PC-9 (cell line): ENCODE measurements at regions of chr2 and their contacts with region 1.

Region 1: GRCh38 chr2:168396131-168396530 is 59.9 kb upstream of the CERS6 start:
- DNase-seq: no peak
- H3K4me3 ChIP-seq: no peak overlapping the region
- H3K27ac ChIP-seq: no peak overlapping the region
- H3K4me1 ChIP-seq: no peaks in the 10 kb centered on the region
- H3K27me3 ChIP-seq: no peaks in the 10 kb centered on the region
- CTCF ChIP-seq: no peak

Region 2: DNA sequence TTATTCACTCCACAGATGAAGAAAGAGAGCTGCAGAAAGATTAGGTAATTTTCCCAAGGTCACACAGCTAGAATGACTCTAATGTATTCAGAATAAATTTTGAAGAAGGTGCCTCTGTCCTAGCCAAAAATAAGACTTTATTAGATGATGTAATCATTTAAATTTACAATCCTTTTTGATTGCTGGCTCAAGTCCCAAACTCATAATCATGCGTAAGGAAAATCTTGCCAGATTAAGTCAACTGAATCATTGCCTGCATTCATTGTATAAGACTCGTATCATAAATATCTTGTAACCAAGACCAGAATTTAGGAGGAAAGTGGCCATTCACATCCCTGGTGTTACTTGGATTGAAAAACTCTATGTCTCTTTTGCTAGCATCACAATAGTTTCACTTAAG is 95.7 kb before region 1 on chr2:
- CTCF ChIA-PET with region 1: interaction called, 14 read pairs
- POLR2A ChIA-PET with region 1: no interaction called
- intact Hi-C with region 1: no loop called
- DNase-seq: no peak
- H3K4me3 ChIP-seq: no peak overlapping the region
- H3K27ac ChIP-seq: no peak overlapping the region
- H3K4me1 ChIP-seq: no peaks in the 10 kb centered on the region
- H3K27me3 ChIP-seq: no peaks in the 10 kb centered on the region
- CTCF ChIP-seq: no peak

Region 3: GRCh38 chr2:168470320-168471162 is 74.4 kb after region 1 on chr2:
- CTCF ChIA-PET with region 1: no interaction called
- POLR2A ChIA-PET with region 1: no interaction called
- intact Hi-C with region 1: no loop called
- DNase-seq: no peak
- H3K4me3 ChIP-seq: no peak overlapping the region
- H3K27ac ChIP-seq: no peak overlapping the region
- H3K4me1 ChIP-seq: peaks cover 15% of the 10 kb centered on the region
- H3K27me3 ChIP-seq: no peaks in the 10 kb centered on the region
- CTCF ChIP-seq: no peak

Region 4: DNA sequence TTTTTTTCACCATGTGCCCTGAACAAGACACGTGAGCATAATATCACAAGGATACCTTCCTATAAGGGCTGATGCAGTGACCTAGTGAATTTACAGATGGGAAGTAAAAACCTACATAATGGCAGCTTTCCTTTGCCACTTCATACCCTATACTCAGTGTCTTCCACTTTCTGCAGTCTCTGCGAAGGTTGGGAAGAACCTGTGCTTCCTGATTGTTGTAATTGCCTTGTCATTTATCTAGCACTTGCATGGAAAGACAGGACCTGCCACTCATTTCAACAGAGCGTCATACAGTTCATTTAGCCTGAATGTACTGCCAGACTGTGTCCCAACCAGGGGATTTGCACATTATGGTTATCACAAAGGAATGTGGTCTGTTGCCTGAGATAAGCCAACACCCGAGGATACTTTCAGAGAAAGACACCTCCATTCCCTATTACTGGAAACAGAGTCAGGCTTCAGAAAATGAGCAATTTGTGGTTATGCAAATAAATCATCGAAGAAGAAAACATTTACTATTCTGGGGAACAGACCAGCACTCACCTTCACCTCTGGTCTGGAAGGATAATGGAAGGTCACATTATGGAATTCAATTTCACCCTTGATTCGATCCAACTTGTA is 580.0 kb after region 1 on chr2:
- CTCF ChIA-PET with region 1: no interaction called
- POLR2A ChIA-PET with region 1: no interaction called
- intact Hi-C with region 1: no loop called
- DNase-seq: no peak
- H3K4me3 ChIP-seq: no peak overlapping the region
- H3K27ac ChIP-seq: no peak overlapping the region
- H3K4me1 ChIP-seq: no peaks in the 10 kb centered on the region
- H3K27me3 ChIP-seq: no peaks in the 10 kb centered on the region
- CTCF ChIP-seq: no peak